ENCODE measurements at regions of chr18 and their contacts with region 1.

Region 1: GRCh38 chr18:61606759-61607158 is 273.5 kb downstream of the CDH20 start:
- DNase-seq: peak; percentile 82
- ATAC-seq: peak; percentile 80
- H3K4me3 ChIP-seq: no peak overlapping the region
- H3K27ac ChIP-seq: no peak overlapping the region
- H3K4me1 ChIP-seq: peaks cover 12% of the 10 kb centered on the region
- H3K27me3 ChIP-seq: no peaks in the 10 kb centered on the region
- CTCF ChIP-seq: no peak

Region 2: GRCh38 chr18:61628085-61628484 is 21.3 kb after region 1 on chr18:
- CTCF ChIA-PET with region 1: no interaction called
- POLR2A ChIA-PET with region 1: no interaction called
- intact Hi-C with region 1: no loop called
- DNase-seq: peak; percentile 26
- ATAC-seq: no peak
- H3K4me3 ChIP-seq: no peak overlapping the region
- H3K27ac ChIP-seq: no peak overlapping the region
- H3K4me1 ChIP-seq: no peaks in the 10 kb centered on the region
- H3K27me3 ChIP-seq: no peaks in the 10 kb centered on the region
- CTCF ChIP-seq: no peak

Region 3: GRCh38 chr18:61784834-61785233 is 178.1 kb after region 1 on chr18:
- CTCF ChIA-PET with region 1: interaction called, 11 read pairs
- POLR2A ChIA-PET with region 1: no interaction called
- intact Hi-C with region 1: no loop called
- DNase-seq: no peak
- ATAC-seq: no peak
- H3K4me3 ChIP-seq: no peak overlapping the region
- H3K27ac ChIP-seq: no peak overlapping the region
- H3K4me1 ChIP-seq: no peaks in the 10 kb centered on the region
- H3K27me3 ChIP-seq: peaks cover 32% of the 10 kb centered on the region
- CTCF ChIP-seq: no peak

Region 4: DNA sequence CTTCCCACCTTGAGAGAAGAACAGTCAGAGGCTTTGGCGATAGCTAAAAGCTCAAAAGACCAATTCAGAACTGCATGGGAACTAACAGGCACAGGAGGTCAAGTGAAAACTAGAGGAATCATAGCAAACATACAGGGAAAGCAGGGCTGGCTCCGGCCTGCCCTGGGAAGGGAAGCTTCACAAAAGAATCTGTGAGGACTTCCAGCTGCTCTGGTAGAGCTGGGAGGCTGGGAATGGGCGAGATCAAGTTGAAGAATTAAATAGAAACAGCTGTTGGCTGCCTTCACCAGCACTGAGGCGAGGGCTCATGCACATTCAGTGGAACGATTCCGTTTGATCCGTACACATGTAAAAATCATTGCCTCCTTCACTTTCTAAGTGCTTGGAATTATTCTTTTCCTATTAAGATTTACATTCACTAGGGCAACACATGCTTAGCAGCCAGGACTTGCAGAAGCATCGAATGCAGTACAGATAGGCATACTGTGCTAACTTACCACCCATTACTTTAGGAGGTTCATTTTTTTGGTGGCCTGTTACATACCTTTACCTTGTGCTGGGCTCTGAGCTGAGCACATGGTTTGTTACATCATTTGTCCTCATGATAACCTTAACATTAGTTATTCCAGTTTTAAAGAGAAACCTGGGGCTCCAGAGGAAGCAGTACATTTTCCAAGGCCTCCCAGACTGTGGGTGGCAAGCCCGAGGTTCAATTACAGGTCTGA is 411.4 kb after region 1 on chr18:
- CTCF ChIA-PET with region 1: no interaction called
- POLR2A ChIA-PET with region 1: no interaction called
- intact Hi-C with region 1: no loop called
- DNase-seq: no peak
- ATAC-seq: no peak
- H3K4me3 ChIP-seq: no peak overlapping the region
- H3K27ac ChIP-seq: no peak overlapping the region
- H3K4me1 ChIP-seq: no peaks in the 10 kb centered on the region
- H3K27me3 ChIP-seq: no peaks in the 10 kb centered on the region
- CTCF ChIP-seq: no peak